ENCODE measurements at regions of chr15 and their contacts with region 1.

Region 1: DNA sequence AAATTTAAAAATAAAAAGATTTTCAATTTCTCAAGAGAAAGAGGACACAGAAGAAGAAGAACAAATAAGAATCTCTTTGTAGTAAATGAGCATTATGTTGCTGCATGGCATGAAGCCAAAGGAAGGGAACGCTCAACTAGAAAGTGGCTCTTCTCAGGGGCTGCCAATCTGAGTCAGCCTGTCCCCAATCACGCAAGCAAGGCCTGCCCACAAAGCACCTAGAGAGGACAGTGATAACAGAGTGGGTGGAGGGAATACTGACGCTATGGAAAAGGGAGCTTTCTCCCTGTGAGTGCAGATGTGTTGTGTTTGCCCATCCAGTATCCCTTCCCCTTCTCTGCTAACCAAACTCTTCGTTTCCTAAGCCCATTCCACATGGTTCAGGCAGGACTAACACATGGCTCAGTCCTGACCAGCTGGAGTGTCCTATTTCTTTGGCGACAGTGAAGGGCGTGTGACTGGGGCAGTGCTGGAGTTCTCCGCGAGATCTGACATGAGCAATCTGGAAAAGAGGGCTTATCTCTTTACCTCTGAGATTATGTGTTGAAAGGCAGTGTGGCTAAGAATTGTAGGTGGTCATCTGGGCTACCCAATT is 14.2 kb downstream of the FBN1 start:
- DNase-seq: no peak
- ATAC-seq: peak; percentile 49
- H3K4me3 ChIP-seq: no peak overlapping the region
- H3K27ac ChIP-seq: peak overlapping the region in 1 of 2 donors; percentile 6
- H3K4me1 ChIP-seq: peaks cover 9 to 10% of the 10 kb centered on the region in 2 donors
- H3K27me3 ChIP-seq: no peaks in the 10 kb centered on the region

Region 2: GRCh38 chr15:48062148-48062861 is 569.0 kb before region 1 on chr15:
- intact Hi-C with region 1: no loop called
- DNase-seq: no peak
- ATAC-seq: peak; percentile 55
- H3K4me3 ChIP-seq: no peak overlapping the region
- H3K27ac ChIP-seq: no peak overlapping the region
- H3K4me1 ChIP-seq: peaks cover 0 to 7% of the 10 kb centered on the region in 2 donors
- H3K27me3 ChIP-seq: no peaks in the 10 kb centered on the region

Region 3: DNA sequence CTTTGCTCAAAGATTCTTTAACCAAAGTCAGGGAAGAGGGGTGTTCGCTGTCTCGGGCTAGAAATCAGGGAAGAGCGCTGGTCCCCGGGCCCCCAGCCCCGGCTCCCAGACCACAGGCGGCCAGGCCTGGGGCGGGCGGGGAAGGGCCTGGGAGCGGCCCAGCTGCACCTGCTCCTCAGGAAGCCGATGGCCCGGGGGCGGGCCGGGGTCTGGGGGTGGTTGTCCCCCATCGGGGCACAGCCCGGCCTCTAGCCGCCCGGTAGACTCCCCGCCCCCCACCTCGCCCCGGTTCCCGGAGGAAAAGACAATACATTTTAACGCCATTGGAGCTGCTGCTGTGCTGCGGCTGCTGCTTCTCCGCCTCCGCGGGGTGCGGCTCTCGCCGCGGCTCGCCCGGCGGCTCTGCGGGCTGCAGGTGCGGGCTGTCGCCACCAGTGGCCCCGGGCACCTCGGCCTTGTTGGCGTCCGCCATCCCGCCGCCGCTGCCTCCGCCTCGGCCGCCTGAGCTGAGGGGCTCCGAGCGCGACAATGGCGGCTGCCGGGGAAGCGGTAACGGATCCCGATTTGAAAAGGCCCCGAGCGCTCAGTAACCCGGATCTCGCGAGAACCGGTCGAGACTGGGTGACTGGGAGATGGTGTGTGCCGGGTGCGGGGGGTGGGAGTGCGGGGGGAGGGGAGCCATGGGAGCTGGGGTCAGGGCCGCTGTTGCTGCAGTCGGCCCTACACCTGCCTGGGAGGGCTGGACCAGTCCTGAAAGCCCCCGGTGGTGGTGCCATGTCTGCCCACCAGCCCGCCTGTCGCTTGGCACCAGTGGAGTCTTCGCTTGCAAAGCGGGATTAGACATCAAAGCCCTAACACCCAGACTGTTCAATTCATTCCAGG is 453.3 kb before region 1 on chr15 and contains the start of gene MYEF2:
- intact Hi-C with region 1: no loop called
- DNase-seq: peak; percentile 84 to 92
- ATAC-seq: peak; percentile 89
- H3K4me3 ChIP-seq: peak within 1 kb of the TSS; percentile 65 to 88
- H3K27ac ChIP-seq: peak within 1 kb of the TSS; percentile 84 to 88
- H3K4me1 ChIP-seq: no peaks in the 10 kb centered on the region
- H3K27me3 ChIP-seq: no peaks in the 10 kb centered on the region
- total RNA-seq, gene MYEF2: 73.0 to 105 TPM

Region 4: GRCh38 chr15:48582452-48583247 is 48.6 kb before region 1 on chr15:
- intact Hi-C with region 1: loop called in 1 of 2 experiments (anchors 10 kb)
- DNase-seq: no peak
- ATAC-seq: no peak
- H3K4me3 ChIP-seq: no peak overlapping the region
- H3K27ac ChIP-seq: no peak overlapping the region
- H3K4me1 ChIP-seq: peaks cover 7 to 9% of the 10 kb centered on the region in 2 donors
- H3K27me3 ChIP-seq: no peaks in the 10 kb centered on the region

Region 5: GRCh38 chr15:48671103-48672022 is 40.1 kb after region 1 on chr15:
- intact Hi-C with region 1: no loop called
- DNase-seq: peak; percentile 76 to 77
- ATAC-seq: peak; percentile 83
- H3K4me3 ChIP-seq: no peak overlapping the region
- H3K27ac ChIP-seq: no peak overlapping the region
- H3K4me1 ChIP-seq: no peaks in the 10 kb centered on the region
- H3K27me3 ChIP-seq: no peaks in the 10 kb centered on the region

Region 6: GRCh38 chr15:48703544-48703943 is 72.3 kb after region 1 on chr15:
- intact Hi-C with region 1: no loop called
- DNase-seq: no peak
- ATAC-seq: no peak
- H3K4me3 ChIP-seq: no peak overlapping the region
- H3K27ac ChIP-seq: no peak overlapping the region
- H3K4me1 ChIP-seq: no peaks in the 10 kb centered on the region
- H3K27me3 ChIP-seq: no peaks in the 10 kb centered on the region